ENCODE measurements at regions of chr1 and their contacts with region 1.

Region 1: DNA sequence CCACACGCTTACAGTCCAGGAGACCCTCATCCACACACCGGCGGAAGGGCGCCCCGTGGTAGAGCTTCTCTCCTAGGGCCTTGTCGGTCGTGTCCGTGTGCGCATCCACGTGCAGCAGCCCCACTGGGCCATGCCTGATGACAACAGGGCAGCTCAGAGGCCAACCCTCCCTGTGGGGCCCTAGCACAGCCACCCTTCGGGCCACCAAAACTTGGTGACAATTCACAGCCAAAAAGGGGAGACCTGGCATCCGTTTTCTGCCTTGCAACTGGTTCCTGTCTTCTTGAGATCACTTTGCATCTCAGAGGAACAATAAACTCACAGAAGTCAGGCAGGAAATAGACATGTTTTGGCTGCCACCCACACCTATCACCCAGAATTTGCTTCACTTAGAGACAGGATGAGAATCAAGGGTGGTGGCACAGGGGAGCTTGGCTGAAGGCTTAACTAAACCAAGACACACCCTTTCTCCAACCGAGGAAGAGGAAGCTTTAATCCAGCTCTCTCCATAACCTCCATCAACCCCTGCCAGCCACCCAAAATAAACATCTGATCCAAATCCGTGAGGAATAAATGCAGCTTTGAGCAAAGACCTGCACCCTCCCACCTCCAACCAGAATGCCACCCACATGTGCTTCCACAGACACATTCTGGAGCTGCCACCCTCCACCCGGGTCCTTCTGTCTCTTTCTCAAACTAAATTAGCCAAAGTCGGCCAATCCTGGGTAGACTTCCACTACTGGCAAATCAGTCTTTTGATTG is 5.7 kb downstream of the AGMAT start:
- DNase-seq: no peak
- ATAC-seq: no peak
- H3K4me3 ChIP-seq: no peak overlapping the region
- H3K27ac ChIP-seq: peak overlapping the region in 1 of 12 donors; percentile 89
- H3K4me1 ChIP-seq: peaks cover 0 to 32% (median under 1%) of the 10 kb centered on the region in 12 donors
- H3K27me3 ChIP-seq: peaks cover 0 to 8% (median 0%) of the 10 kb centered on the region in 9 donors
- CTCF ChIP-seq: no peak
- POLR2A ChIP-seq: no peak

Region 2: DNA sequence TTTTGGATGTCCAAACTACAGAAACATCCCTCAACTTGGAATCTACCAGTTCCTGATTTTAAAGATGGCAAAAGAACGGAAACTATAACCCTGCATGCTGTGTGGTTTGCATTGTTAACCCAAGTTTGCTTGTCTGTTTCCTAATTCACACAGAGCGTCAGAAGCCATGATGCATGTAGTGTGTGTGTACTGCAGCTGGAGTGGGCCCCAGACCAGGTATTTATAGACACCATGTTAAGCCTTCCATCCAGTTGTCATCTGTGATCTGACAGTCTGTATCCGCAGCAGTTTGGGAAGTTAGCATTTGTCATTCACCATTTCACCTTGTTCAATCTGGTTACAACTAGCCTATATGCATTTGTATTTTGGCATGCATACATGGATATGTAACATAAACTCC is 77.4 kb after region 1 on chr1:
- intact Hi-C with region 1: loop called in 1 of 10 experiments (anchors 10 kb)
- DNase-seq: no peak
- ATAC-seq: peak; percentile 51 to 84 (median 79)
- H3K4me3 ChIP-seq: no peak overlapping the region
- H3K27ac ChIP-seq: peak overlapping the region in 3 of 12 donors; percentile 20 to 54 (median 41)
- H3K4me1 ChIP-seq: peaks cover 0 to 16% (median 3%) of the 10 kb centered on the region in 12 donors
- H3K27me3 ChIP-seq: no peaks in the 10 kb centered on the region
- CTCF ChIP-seq: peak in 3 of 12 donors; percentile 16 to 23 (median 17)
- POLR2A ChIP-seq: no peak

Measured in heart left ventricle (tissue), 16 donors.